PC-9 (cell line): ENCODE measurements at regions of chr22 and their contacts with region 1.

Region 1: GRCh38 chr22:36977947-36978660 is 41.1 kb downstream of the TST start:
- DNase-seq: peak; percentile 72 to 87
- H3K4me3 ChIP-seq: peak overlapping the region; percentile 51
- H3K27ac ChIP-seq: no peak overlapping the region
- H3K4me1 ChIP-seq: peaks cover 5% of the 10 kb centered on the region
- H3K27me3 ChIP-seq: no peaks in the 10 kb centered on the region
- CTCF ChIP-seq: peak; percentile 99

Region 2: GRCh38 chr22:36757668-36758211 is 220.4 kb before region 1 on chr22:
- CTCF ChIA-PET with region 1: no interaction called
- POLR2A ChIA-PET with region 1: no interaction called
- intact Hi-C with region 1: loop called (anchors 1 kb)
- DNase-seq: peak; percentile 65 to 84
- H3K4me3 ChIP-seq: no peak overlapping the region
- H3K27ac ChIP-seq: no peak overlapping the region
- H3K4me1 ChIP-seq: peaks cover 6% of the 10 kb centered on the region
- H3K27me3 ChIP-seq: peaks cover 23% of the 10 kb centered on the region
- CTCF ChIP-seq: peak; percentile 97

Region 3: GRCh38 chr22:36781656-36782627 is 196.2 kb before region 1 on chr22:
- CTCF ChIA-PET with region 1: no interaction called
- POLR2A ChIA-PET with region 1: no interaction called
- intact Hi-C with region 1: loop called (anchors 1 kb)
- DNase-seq: peak; percentile 80 to 93
- H3K4me3 ChIP-seq: no peak overlapping the region
- H3K27ac ChIP-seq: no peak overlapping the region
- H3K4me1 ChIP-seq: peaks cover 5% of the 10 kb centered on the region
- H3K27me3 ChIP-seq: peaks cover 9% of the 10 kb centered on the region
- CTCF ChIP-seq: peak; percentile 99

Region 4: DNA sequence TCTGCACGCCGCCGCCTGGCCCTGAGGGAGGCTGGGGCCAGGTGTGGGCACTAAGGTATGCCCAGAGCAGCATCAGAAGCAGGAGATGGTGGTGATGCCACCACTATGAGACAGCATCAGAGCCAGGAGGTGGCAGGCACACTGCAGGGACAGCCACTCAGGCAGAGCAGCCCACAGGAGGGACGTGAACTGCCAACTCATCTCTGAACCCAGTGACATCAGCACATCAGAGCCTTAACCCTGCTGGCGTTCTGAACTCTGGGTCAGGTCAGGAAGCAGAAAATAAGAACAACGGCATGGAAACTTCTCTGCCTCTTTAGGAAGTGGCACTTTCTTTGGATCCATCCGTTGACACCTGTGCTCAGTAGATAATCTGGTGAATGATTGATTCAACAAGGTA is 187.5 kb before region 1 on chr22:
- CTCF ChIA-PET with region 1: interaction called, 4 read pairs
- POLR2A ChIA-PET with region 1: no interaction called
- intact Hi-C with region 1: loop called (anchors 1 kb)
- DNase-seq: peak in 1 of 2 experiments; percentile 59
- H3K4me3 ChIP-seq: no peak overlapping the region
- H3K27ac ChIP-seq: no peak overlapping the region
- H3K4me1 ChIP-seq: no peaks in the 10 kb centered on the region
- H3K27me3 ChIP-seq: peaks cover 19% of the 10 kb centered on the region
- CTCF ChIP-seq: 0 out of 2 replicates have a peak, but pooled peaks have one; percentile 21

Region 5: DNA sequence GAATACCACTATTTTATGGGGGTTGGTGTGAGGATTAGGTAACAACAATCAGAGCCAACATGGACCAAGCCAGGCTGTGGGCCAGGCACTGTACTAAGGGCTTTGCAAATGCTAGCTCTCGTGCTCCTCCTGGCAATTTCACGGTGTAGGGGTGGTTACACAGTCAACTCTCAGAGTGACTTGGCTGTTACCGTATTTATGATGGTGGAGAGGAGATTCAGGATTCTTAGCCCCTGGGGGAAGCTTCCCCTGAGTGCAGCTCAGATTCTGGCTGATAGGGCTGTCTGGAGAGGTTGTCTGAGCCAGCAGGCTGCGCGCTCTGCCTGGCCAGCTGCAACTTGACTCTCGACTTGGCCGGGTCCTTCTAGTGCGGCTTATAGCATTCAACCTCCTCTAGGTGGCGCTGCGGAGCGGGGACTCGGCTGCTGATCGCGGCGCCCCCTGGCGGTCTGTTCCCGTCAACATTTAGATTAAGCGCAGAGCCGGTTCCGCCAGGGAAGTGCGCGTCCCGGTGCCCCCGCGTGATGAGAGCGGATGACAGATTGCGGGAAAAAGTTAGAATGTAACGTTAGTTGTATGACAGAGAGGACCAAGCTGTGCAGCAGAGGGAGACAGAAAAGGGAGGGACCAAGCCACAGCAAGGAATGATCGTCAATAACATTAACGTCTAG is 121.8 kb before region 1 on chr22:
- CTCF ChIA-PET with region 1: interaction called, 17 read pairs
- POLR2A ChIA-PET with region 1: no interaction called
- intact Hi-C with region 1: loop called (anchors 1 kb)
- DNase-seq: peak; percentile 68 to 94
- H3K4me3 ChIP-seq: peak overlapping the region; percentile 13; the same call in 1 of the 2 replicates
- H3K27ac ChIP-seq: no peak overlapping the region
- H3K4me1 ChIP-seq: peaks cover 7% of the 10 kb centered on the region
- H3K27me3 ChIP-seq: no peaks in the 10 kb centered on the region
- CTCF ChIP-seq: peak; percentile 100

Region 6: DNA sequence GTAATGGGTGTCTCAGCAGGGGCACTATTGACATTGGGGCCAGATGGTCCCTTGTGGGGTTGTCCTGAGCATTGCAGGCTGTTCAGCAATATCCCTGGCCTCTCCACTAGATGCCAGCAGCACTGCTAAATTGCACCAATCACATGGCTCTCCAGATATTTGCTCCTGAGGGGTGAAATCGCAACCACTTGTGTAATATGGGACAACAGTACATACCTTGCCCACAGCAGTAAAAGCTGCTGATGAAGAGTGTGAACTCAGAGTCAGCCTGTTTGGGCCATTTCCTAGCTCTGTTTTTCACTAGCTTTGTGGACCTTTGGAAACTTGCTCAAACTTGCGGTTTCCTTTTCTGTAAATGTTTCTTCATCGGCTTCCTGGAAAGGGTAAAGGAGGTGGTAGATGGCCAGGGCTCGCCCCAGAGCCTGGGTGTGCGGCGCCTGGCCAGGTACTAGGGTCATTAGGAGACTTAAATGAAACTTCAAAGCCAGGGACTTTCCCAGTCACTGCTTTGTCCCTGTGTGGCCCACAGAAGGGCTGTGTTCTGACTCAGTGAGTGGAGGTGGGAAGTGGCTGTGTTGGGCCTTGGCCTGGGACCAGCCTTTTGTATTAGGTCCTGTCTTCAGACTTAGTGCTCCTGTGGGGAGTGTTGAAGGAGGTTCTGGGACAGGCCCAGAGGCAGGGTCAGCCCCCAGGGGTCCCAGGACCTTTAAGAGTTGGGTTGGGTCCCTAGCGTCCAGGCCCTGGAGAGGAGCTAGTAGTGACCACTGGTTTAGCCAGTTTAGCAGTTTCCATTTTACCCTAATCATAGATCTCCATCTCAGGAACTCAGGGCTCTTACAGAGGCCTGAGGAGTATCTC is 104.2 kb before region 1 on chr22:
- CTCF ChIA-PET with region 1: interaction called, 11 read pairs
- POLR2A ChIA-PET with region 1: no interaction called
- intact Hi-C with region 1: loop called (anchors 1 kb)
- DNase-seq: peak; percentile 66 to 97
- H3K4me3 ChIP-seq: peak overlapping the region; percentile 8; the same call in 1 of the 2 replicates
- H3K27ac ChIP-seq: peak overlapping the region; percentile 90
- H3K4me1 ChIP-seq: peaks cover 59% of the 10 kb centered on the region
- H3K27me3 ChIP-seq: no peaks in the 10 kb centered on the region
- CTCF ChIP-seq: peak; percentile 80

Region 7: GRCh38 chr22:37043828-37044538 is 65.9 kb after region 1 on chr22:
- CTCF ChIA-PET with region 1: interaction called, 11 read pairs
- POLR2A ChIA-PET with region 1: interaction called, 3 read pairs
- intact Hi-C with region 1: no loop called
- DNase-seq: peak; percentile 74 to 80
- H3K4me3 ChIP-seq: no peak overlapping the region
- H3K27ac ChIP-seq: no peak overlapping the region
- H3K4me1 ChIP-seq: peaks cover 38% of the 10 kb centered on the region
- H3K27me3 ChIP-seq: no peaks in the 10 kb centered on the region
- CTCF ChIP-seq: peak; percentile 93